ENCODE measurements at regions of chrX and their contacts with region 1.

Region 1: DNA sequence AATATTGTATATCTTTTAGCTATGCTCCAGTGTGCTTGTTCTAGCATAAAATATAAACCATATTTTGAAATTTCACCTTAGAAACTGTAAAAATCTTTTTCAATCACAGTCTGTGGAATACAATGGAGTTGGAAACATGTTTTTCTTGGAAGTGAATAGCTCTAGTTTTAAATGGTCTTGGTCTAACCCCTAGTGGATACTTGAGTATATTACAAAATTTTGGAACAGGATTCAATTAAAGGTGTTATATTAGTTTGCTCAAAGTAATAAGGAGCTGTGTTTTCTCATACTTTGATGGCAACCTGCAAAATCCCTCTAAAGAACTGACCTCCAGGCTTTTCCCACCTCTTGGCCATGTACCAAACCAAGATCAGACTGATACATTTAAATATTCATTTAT is 48.2 kb downstream of the STK26 start:
- H3K4me3 ChIP-seq: no peak overlapping the region
- H3K27ac ChIP-seq: no peak overlapping the region
- H3K4me1 ChIP-seq: no peaks in the 10 kb centered on the region
- CTCF ChIP-seq: no peak

Region 2: GRCh38 chrX:131854581-131854980 is 216.7 kb before region 1 on chrX:
- CTCF ChIA-PET with region 1: interaction called, 13 read pairs
- POLR2A ChIA-PET with region 1: no interaction called
- H3K4me3 ChIP-seq: no peak overlapping the region
- H3K27ac ChIP-seq: no peak overlapping the region
- H3K4me1 ChIP-seq: no peaks in the 10 kb centered on the region
- CTCF ChIP-seq: peak; percentile 80

Region 3: GRCh38 chrX:132058975-132059374 is 12.3 kb before region 1 on chrX:
- CTCF ChIA-PET with region 1: interaction called, 12 read pairs
- POLR2A ChIA-PET with region 1: no interaction called
- H3K4me3 ChIP-seq: no peak overlapping the region
- H3K27ac ChIP-seq: no peak overlapping the region
- H3K4me1 ChIP-seq: no peaks in the 10 kb centered on the region
- CTCF ChIP-seq: no peak

Measured in HEK293 (cell line).